Activated CD4-positive, alpha-beta T cell treated with anti-CD3 and anti-CD28 coated beads for 36 hours (primary cell): ENCODE measurements at regions of chr3 and their contacts with region 1.

Region 1: GRCh38 chr3:49104483-49105291 is at the start of gene QARS1:
- DNase-seq: peak; percentile 94
- ATAC-seq: peak; percentile 100
- H3K4me3 Mint-ChIP-seq: peak within 1 kb of the TSS; percentile 96
- H3K27ac Mint-ChIP-seq: peak within 1 kb of the TSS; percentile 96
- H3K4me1 Mint-ChIP-seq: peaks cover 21% of the 10 kb centered on the region
- H3K27me3 Mint-ChIP-seq: no peaks in the 10 kb centered on the region
- total RNA-seq, gene QARS1: 240 to 342 TPM

Region 2: DNA sequence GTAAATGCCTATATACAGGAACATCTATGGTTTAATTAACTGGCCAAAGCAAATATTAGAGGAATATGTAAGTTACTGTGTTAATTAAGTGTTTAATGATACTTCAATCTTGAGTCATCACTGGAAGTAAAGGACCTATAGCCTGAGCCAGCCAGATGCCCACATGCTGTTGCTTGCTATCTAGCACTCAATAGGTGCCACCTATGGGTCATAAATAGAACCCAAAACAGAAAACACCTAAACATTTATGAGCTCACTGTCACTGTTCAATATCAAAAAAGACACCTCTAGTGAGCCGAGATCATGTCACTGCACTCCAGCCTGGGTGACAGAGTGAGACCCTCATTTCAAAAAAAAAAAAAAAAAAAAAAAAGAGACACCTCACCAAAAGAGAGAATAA is 339.3 kb before region 1 on chr3:
- CTCF ChIA-PET with region 1: no interaction called
- POLR2A ChIA-PET with region 1: no interaction called
- intact Hi-C with region 1: no loop called
- DNase-seq: no peak
- ATAC-seq: no peak
- H3K4me3 Mint-ChIP-seq: no peak overlapping the region
- H3K27ac Mint-ChIP-seq: no peak overlapping the region
- H3K4me1 Mint-ChIP-seq: no peaks in the 10 kb centered on the region
- H3K27me3 Mint-ChIP-seq: no peaks in the 10 kb centered on the region

Region 3: DNA sequence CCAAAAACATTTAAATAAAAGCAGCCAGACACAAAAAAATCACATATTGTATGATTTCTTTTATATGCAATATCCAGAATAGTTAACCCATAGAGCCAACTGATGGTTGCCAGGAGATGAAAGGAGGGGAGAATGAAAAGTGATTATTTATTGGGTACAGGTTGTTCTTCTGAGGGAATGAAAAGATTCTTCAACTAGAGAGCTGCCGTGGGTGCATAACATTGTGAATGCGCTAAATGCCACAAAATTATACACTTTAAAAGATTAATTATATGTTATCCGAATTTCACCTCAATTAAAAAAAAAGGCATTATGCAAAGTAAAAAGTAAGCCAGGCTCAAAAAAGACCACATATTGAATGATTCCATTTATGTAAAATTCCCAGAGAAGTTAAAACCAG is 293.2 kb before region 1 on chr3:
- CTCF ChIA-PET with region 1: no interaction called
- POLR2A ChIA-PET with region 1: no interaction called
- intact Hi-C with region 1: no loop called
- DNase-seq: no peak
- ATAC-seq: no peak
- H3K4me3 Mint-ChIP-seq: peak overlapping the region; percentile 18
- H3K27ac Mint-ChIP-seq: peak overlapping the region; percentile 77
- H3K4me1 Mint-ChIP-seq: peaks cover 32% of the 10 kb centered on the region
- H3K27me3 Mint-ChIP-seq: no peaks in the 10 kb centered on the region

Region 4: DNA sequence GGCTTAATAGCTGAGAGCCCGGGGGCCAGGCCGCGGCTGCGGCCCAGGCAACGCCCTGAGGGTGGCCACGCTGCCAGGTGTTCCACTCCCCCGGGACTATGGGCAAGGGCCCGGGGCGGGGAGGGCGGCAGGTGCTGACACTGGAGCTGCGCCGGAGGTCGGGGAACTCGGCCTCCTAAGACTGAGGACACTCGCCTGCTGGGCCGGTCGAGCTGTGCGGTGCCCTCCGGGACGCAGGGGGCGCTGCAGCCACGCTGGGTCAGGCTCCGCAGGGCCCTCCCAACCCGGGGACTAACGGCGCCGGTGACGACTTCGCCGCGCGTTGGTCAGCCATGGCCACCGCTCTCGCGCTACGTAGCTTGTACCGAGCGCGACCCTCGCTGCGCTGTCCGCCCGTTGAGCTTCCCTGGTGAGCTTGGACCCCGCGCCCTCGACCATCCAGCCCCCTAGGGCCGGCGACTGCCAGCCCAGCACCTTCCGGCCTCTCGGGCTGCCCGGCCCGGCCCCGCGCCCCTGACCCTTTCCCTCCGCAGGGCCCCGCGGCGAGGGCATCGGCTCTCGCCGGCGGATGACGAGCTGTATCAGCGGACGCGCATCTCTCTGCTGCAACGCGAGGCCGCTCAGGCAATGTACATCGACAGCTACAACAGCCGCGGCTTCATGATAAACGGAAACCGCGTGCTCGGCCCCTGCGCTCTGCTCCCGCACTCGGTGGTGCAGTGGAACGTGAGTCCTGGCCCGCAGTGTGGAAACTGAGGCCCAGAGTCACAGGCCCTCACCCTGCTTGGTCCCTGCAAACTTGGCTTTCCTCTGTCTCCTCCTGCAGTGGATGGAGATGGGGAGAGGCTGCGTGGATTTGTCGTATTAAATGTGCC is 82.6 kb before region 1 on chr3 and contains the start of gene NDUFAF3:
- CTCF ChIA-PET with region 1: no interaction called
- POLR2A ChIA-PET with region 1: no interaction called
- intact Hi-C with region 1: no loop called
- DNase-seq: peak; percentile 96
- ATAC-seq: peak; percentile 78
- H3K4me3 Mint-ChIP-seq: peak within 1 kb of the TSS; percentile 95
- H3K27ac Mint-ChIP-seq: peak within 1 kb of the TSS; percentile 96
- H3K4me1 Mint-ChIP-seq: peaks cover 60% of the 10 kb centered on the region
- H3K27me3 Mint-ChIP-seq: no peaks in the 10 kb centered on the region
- total RNA-seq, gene NDUFAF3: 90.8 to 108 TPM

Region 5: DNA sequence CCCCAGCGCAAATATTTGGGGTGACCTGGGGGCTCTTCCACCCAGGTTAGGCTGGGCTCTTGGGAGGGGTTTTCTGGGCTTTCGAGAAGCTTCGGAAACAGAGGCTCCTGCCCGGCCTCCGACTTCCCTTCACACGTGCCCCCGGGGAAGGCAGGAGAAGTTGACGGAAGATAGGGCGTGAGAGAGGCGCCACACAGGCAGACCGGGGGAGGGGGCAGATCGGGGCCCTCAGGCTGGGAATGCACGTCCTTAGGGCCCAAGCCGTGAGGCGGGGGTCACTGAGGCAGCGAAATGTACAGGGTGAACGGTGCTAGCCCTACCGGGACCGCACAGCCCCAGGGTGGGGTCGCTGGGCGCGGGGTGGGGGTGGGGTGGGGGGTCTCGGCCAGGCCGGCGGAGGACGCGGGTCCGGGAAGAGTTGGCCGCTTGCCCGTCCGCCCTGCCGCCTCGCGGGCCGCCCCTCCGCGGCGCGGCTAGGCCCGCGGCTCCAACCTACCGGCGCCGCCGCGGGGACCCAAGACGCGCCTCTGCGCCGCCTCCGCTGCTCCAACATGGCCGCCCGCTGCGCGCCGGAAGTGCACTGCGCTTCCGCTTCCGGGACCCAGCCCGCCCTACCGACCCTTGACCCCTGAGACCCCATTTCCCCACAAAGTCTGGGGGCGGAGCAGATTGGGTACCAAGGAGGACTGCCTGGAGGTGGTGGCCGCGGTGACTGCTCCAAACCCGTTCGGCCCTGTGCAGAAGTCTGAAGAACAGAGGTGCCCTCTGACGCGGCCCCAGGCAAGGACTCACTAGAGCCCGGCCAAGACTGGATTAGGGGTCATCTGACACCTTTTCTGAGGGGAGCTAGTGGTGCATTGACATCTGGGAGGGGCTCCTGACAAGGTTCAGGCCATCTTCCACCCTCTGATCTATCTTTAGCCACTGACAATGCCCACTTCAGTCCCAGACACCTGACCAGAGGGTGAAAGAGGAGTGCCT is 61.4 kb after region 1 on chr3 and contains the start of gene CCDC71:
- CTCF ChIA-PET with region 1: interaction called, 4 read pairs
- POLR2A ChIA-PET with region 1: no interaction called
- intact Hi-C with region 1: loop called in 1 of 2 experiments (anchors 1 kb)
- DNase-seq: peak; percentile 88
- ATAC-seq: peak; percentile 81
- H3K4me3 Mint-ChIP-seq: peak within 1 kb of the TSS; percentile 90
- H3K27ac Mint-ChIP-seq: peak within 1 kb of the TSS; percentile 89
- H3K4me1 Mint-ChIP-seq: peaks cover 39% of the 10 kb centered on the region
- H3K27me3 Mint-ChIP-seq: no peaks in the 10 kb centered on the region
- total RNA-seq, gene CCDC71: 19.5 to 22.2 TPM

Region 6: GRCh38 chr3:49656541-49657112 is 551.9 kb after region 1 on chr3:
- CTCF ChIA-PET with region 1: no interaction called
- POLR2A ChIA-PET with region 1: no interaction called
- intact Hi-C with region 1: no loop called
- DNase-seq: peak; percentile 20
- ATAC-seq: no peak
- H3K4me3 Mint-ChIP-seq: no peak overlapping the region
- H3K27ac Mint-ChIP-seq: no peak overlapping the region
- H3K4me1 Mint-ChIP-seq: no peaks in the 10 kb centered on the region
- H3K27me3 Mint-ChIP-seq: peaks cover 2% of the 10 kb centered on the region